Tibial artery (tissue), 4 donors: ENCODE measurements at regions of chrX and their contacts with region 1.

Region 1: GRCh38 chrX:15493118-15493962 is at the start of gene PIR:
- DNase-seq: peak; percentile 84 to 92
- H3K4me3 ChIP-seq: peak within 1 kb of the TSS; percentile 59 to 64
- H3K27ac ChIP-seq: peak within 1 kb of the TSS; percentile 55 to 77
- H3K4me1 ChIP-seq: peaks cover 0 to 16% (median 0%) of the 10 kb centered on the region in 4 donors
- H3K27me3 ChIP-seq: no peaks in the 10 kb centered on the region
- CTCF ChIP-seq: peak in 1 of 2 experiments; percentile 18

Region 2: DNA sequence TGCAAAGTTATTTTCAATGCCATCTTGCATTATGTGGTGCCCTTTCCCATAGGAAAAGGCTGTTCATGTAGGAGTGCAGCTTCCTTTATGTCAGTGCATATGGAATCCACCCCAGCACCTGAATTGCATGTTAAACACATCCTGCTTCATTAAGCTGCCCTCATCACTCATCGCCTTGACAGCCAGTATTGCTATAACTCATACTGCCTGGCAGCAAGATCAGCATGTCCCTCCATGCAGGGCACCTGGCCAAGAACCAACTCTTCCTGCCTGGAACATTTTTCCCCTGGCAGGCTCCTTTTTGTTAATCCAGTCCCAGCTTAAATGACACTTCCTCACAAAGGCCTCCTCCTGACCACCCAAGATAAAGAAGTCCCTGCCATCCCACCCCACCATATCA is 221.2 kb after region 1 on chrX:
- intact Hi-C with region 1: no loop called
- DNase-seq: peak in 1 of 2 donors; percentile 19
- H3K4me3 ChIP-seq: no peak overlapping the region
- H3K27ac ChIP-seq: no peak overlapping the region
- H3K4me1 ChIP-seq: no peaks in the 10 kb centered on the region
- H3K27me3 ChIP-seq: no peaks in the 10 kb centered on the region
- CTCF ChIP-seq: no peak

Region 3: DNA sequence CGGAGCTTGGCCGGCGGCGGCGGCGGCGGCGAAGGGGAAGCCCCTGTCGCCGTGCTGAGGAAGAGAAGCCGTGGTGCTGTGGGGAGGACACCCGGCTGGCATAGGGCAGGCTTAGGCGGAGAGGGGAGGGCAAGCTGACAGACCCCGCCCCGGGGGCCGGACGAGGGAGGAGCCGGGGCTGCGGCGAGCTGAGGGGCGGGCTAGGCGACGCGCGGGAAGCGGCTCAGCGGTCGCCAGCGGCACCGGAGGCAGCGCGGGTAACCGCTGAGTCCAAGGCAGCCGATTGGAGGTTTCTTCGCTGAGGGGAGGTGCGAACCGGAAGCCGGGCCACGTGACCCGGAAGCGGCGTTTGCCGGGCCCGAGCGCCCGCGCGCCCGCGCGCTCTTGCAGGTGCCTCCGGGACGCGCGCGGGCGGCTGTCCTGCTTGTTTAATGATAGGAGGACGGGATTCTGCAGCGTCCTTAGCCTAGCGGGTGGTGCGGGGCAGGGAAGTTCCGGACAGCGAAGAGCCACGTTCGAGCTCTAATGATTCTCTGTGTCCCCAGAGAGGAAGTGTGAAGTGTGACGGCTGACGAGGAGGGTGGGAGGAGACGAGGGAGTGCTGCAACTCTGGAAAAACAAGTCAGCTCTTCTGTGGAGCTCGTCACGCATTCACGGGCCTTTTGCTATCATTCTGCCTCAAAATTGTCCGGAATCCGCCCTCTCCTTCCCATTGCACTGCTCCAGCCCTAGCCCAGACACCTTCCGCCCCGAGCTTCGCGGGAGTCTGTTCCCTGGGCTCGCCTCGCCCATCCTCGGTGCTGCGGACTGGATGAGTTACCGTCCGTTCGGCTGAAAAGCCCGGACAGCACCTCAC is 361.6 kb after region 1 on chrX and contains the start of gene AP1S2:
- intact Hi-C with region 1: loop called (anchors 10 kb)
- DNase-seq: peak; percentile 85 to 94
- H3K4me3 ChIP-seq: peak within 1 kb of the TSS; percentile 84 to 87
- H3K27ac ChIP-seq: peak within 1 kb of the TSS; percentile 83 to 86
- H3K4me1 ChIP-seq: peaks cover 0 to 16% (median 0%) of the 10 kb centered on the region in 4 donors
- H3K27me3 ChIP-seq: no peaks in the 10 kb centered on the region
- CTCF ChIP-seq: no peak